AG04450 (cell line): ENCODE measurements at regions of chr11 and their contacts with region 1.

Region 1: DNA sequence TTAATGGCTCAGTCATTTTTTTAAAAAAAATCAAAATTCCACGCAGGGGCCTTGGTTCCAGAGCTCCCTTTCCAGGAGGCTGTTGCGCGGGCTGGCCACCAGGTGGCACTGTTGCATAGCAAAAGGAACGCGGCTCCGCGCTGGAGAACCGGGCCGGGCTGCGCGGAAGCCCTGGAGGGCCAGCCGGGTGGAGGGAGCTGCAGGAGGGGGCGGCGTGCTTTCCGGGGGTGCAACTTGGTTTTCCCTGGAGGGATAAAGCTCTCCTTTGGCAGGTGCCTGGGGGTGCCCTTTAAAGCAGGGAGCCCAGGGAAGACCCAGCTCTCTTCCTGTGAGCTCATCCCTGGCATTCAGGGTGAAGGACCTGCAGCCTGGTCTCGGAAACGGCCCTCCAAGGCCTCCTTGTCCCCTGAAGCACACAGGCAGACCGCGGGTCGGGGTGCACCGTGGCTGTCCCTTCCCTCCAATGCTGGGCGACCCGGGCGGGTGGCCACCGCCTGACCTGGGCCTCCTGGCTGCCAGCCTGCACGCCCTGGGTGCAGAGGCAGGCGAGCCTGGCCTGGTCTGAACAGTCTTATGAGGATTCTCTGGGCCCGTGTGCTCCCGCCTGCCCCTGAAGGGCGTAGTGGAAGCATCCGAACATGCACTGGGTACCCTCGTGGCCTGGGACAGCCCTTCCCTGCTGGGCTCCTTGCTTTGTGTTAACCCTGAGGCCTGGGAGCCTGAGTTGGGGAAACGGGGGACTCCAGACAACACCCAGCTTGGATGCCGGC is 23.4 kb downstream of the KRTAP5-5 start:
- DNase-seq: peak; percentile 7
- H3K4me3 ChIP-seq: no peak overlapping the region
- H3K27ac ChIP-seq: no peak overlapping the region
- H3K27me3 ChIP-seq: peaks cover 39% of the 10 kb centered on the region
- CTCF ChIP-seq: peak; percentile 91

Region 2: GRCh38 chr11:1640076-1640946 is 12.6 kb before region 1 on chr11:
- CTCF ChIA-PET with region 1: interaction called, 43 read pairs
- POLR2A ChIA-PET with region 1: no interaction called
- DNase-seq: no peak
- H3K4me3 ChIP-seq: no peak overlapping the region
- H3K27ac ChIP-seq: no peak overlapping the region
- H3K27me3 ChIP-seq: peaks cover 34% of the 10 kb centered on the region
- CTCF ChIP-seq: peak; percentile 77

Region 3: GRCh38 chr11:1682225-1682905 is 29.4 kb after region 1 on chr11:
- CTCF ChIA-PET with region 1: interaction called, 25 read pairs
- POLR2A ChIA-PET with region 1: no interaction called
- DNase-seq: no peak
- H3K4me3 ChIP-seq: no peak overlapping the region
- H3K27ac ChIP-seq: no peak overlapping the region
- H3K27me3 ChIP-seq: peaks cover 4% of the 10 kb centered on the region
- CTCF ChIP-seq: no peak

Region 4: GRCh38 chr11:1832211-1832919 is 179.4 kb after region 1 on chr11:
- CTCF ChIA-PET with region 1: interaction called, 57 read pairs
- POLR2A ChIA-PET with region 1: no interaction called
- DNase-seq: no peak
- H3K4me3 ChIP-seq: no peak overlapping the region
- H3K27ac ChIP-seq: no peak overlapping the region
- H3K27me3 ChIP-seq: peaks cover 11% of the 10 kb centered on the region
- CTCF ChIP-seq: peak; percentile 96

Region 5: DNA sequence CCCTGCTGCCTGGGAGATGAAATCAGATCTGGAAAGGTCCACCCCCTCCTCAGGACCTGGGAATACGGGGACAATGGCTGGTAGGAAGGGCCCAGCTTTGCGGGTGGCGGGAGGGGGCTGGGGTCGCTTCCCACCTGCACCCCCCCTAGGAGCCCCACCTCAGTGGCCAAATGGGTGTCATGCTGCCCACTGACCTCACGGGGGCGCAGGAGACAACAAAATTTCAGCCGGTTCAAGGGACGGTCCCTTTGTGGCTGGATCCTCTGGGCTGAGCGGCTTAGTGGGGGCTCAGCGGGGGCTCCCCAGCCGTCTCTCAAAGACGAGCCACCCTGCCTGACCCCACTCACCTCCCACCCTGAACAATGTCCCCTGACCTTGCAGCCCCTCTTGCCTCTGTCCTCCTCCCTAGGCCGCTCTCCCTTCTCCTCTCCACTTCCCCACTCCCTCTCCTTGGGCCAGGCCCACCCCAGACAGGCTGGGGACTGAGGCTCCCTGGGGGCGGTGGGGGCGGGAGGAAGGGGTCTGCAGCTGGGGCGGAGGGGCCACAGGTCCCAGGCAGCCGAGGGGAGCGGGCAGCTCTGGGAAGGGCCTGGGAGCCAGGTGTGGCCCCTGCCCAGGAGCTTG is 384.0 kb after region 1 on chr11:
- CTCF ChIA-PET with region 1: interaction called, 13 read pairs
- POLR2A ChIA-PET with region 1: no interaction called
- DNase-seq: no peak
- H3K4me3 ChIP-seq: no peak overlapping the region
- H3K27ac ChIP-seq: no peak overlapping the region
- H3K27me3 ChIP-seq: no peaks in the 10 kb centered on the region
- CTCF ChIP-seq: no peak

Region 6: GRCh38 chr11:2166091-2166851 is 513.3 kb after region 1 on chr11:
- CTCF ChIA-PET with region 1: interaction called, 10 read pairs
- POLR2A ChIA-PET with region 1: no interaction called
- DNase-seq: no peak
- H3K4me3 ChIP-seq: no peak overlapping the region
- H3K27ac ChIP-seq: no peak overlapping the region
- H3K27me3 ChIP-seq: peaks cover 17% of the 10 kb centered on the region
- CTCF ChIP-seq: peak; percentile 46